ENCODE measurements at regions of chr7 and their contacts with region 1.

Region 1: DNA sequence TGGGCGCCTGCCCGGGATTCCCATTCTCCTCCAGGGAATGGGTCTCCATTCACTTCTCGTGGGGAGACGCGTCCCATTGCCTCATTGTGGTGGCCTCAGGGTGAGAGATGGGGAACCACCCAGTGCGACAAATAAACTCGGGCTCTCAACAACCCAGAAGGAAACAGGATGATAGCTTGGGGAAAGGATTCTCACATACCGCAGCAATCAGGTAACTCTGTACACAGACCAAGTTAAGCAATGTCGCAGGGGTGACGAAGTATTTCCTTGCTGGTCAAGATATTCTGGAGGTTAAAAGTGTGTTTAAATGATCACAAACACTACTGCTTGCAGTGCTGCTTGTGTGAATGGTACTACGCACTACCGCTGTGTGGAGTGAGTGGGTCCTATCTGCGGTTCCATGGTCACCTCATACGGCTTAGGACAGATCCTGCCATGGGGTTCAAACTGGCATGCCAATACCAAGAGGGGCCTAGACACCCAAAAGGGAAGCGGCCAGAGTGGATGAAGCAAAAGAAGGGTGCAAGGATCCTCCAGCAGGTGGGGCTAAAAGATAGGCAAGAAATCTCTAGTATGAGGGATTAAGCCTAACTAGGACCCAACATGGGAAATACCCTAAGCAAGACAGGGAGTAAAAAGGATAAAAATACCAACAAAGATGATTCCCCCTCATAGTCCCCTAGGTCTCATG is 143.8 kb upstream of the TMEM106B start:
- DNase-seq: peak; percentile 24 to 81
- ATAC-seq: peak; percentile 55 to 60 (median 57)
- H3K4me3 ChIP-seq: no peak overlapping the region
- H3K4me3 Mint-ChIP-seq: no peak overlapping the region
- H3K27ac ChIP-seq: no peak overlapping the region
- H3K27ac Mint-ChIP-seq: no peak overlapping the region
- H3K4me1 ChIP-seq: no peaks in the 10 kb centered on the region
- H3K4me1 Mint-ChIP-seq: no peaks in the 10 kb centered on the region
- H3K27me3 ChIP-seq: no peaks in the 10 kb centered on the region
- H3K27me3 Mint-ChIP-seq: no peaks in the 10 kb centered on the region
- CTCF ChIP-seq: peak; percentile 65

Region 2: GRCh38 chr7:12233175-12233574 is 165.9 kb after region 1 on chr7:
- intact Hi-C with region 1: no loop called
- DNase-seq: no peak
- ATAC-seq: no peak
- H3K4me3 ChIP-seq: no peak overlapping the region
- H3K4me3 Mint-ChIP-seq: no peak overlapping the region
- H3K27ac ChIP-seq: no peak overlapping the region
- H3K27ac Mint-ChIP-seq: no peak overlapping the region
- H3K4me1 ChIP-seq: no peaks in the 10 kb centered on the region
- H3K4me1 Mint-ChIP-seq: no peaks in the 10 kb centered on the region
- H3K27me3 ChIP-seq: no peaks in the 10 kb centered on the region
- H3K27me3 Mint-ChIP-seq: no peaks in the 10 kb centered on the region
- CTCF ChIP-seq: no peak

Region 3: GRCh38 chr7:12494687-12495024 is 427.4 kb after region 1 on chr7:
- intact Hi-C with region 1: loop called (anchors 5 kb)
- DNase-seq: no peak
- ATAC-seq: no peak
- H3K4me3 ChIP-seq: no peak overlapping the region
- H3K4me3 Mint-ChIP-seq: no peak overlapping the region
- H3K27ac ChIP-seq: no peak overlapping the region
- H3K27ac Mint-ChIP-seq: no peak overlapping the region
- H3K4me1 ChIP-seq: no peaks in the 10 kb centered on the region
- H3K4me1 Mint-ChIP-seq: peaks cover 0 to 5% of the 10 kb centered on the region in 2 donors
- H3K27me3 ChIP-seq: no peaks in the 10 kb centered on the region
- H3K27me3 Mint-ChIP-seq: peaks cover 0 to 2% of the 10 kb centered on the region in 2 donors
- CTCF ChIP-seq: no peak